ENCODE measurements at regions of chr12 and their contacts with region 1.

Region 1: GRCh38 chr12:57693659-57694458 is at the start of gene OS9:
- DNase-seq: peak; percentile 89 to 99 (median 97)

Region 2: DNA sequence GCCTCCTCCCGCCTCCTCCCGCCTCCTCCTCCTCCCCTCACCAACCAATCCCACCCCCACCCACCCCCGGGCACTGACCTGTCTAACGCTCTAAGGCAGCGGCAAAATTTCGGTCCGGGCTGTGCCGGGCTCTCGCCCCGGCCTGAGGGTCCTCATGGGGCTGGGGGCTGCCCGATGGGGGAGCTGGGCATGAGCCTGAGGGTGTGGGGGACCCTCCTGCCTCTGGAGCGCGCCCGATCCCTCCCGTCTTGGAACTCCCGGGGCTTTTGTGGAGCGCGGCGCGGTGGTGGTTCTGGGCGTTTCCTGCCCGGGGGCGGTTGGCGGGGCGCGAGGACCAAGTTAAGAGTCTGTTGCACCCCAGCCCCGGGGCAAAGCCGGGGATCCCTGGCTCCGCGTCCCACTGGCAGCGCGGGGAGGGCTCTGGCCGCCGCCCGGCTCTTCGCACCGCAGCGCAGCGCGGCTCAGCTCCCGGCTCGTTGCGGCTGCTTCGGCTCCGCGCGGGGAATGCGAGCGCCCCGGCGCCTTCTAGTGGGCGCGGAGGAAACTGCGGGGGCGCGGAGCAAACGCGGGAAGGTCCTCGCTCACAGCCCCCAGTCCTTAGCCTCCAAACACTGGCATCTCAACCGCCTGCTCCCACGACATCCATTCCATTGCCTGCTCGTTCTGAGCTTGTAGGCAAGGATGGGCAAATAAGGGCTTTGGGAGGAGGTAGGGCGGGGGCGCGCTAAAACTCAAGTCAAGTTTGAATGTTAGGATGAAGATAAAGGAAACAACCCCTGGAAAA is 61.0 kb before region 1 on chr12 and contains the start of gene B4GALNT1:
- intact Hi-C with region 1: loop called (anchors 2 kb)
- DNase-seq: peak; percentile 44 to 96 (median 70)